Breast epithelium (tissue), 4 donors: ENCODE measurements at regions of chr5 and their contacts with region 1.

Region 1: DNA sequence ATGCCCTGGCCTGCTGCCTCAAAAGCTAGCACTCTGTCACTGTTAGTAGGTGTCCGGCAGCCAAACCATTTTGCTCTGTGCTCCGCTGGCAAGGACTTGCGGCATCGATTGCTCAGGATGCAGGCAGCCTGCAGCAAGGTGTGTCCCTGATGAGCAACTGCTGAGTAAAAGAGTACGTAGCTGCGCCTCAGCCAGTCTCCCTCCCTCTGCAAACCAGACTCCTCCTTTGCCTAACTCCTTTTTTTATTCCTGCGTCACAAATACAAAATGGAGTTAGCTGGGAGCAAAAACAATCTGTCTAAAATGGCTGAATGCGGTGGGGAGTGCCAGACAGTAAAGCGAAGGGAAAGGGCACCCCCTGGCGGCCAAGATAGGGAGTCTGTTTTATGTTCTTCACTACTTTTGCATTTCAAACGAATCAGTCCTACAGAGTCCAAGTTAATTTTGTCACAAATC is 61.1 kb downstream of the DIAPH1 start:
- DNase-seq: peak; percentile 80 to 89
- H3K4me3 ChIP-seq: peak overlapping the region in 2 of 3 donors; percentile 28 to 57
- H3K27ac ChIP-seq: peak overlapping the region; percentile 83 to 87
- H3K4me1 ChIP-seq: peaks cover 0 to 3% of the 10 kb centered on the region in 2 donors
- H3K27me3 ChIP-seq: no peaks in the 10 kb centered on the region
- CTCF ChIP-seq: peak; percentile 72 to 95 (median 73)
- POLR2A ChIP-seq: no peak

Region 2: DNA sequence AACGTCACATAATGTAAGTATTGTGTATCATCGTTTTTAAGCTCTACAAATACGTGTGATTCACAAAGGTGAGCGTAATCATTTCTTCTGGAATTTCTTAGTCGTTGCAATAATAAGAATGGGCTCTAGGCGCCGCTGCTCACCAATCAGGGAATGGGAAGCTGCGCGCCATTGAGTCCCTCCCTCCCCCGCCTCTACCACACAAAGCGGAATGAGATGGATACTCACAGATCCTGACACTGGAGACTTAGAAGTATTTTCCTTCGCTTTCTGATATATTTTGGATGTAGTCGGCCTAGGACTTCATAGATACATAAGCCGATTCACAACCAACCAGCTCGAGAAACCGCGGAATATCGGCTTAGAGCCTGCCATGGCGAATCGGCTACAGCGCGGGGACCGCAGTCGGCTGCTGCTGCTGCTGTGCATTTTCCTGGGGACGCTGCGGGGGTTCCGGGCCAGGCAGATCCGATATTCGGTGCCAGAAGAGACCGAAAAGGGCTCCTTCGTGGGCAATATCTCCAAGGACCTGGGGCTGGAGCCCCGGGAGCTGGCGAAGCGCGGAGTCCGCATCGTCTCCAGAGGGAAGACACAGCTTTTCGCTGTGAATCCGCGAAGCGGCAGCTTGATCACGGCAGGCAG is 136.7 kb before region 1 on chr5 and contains the start of gene PCDHGA11:
- intact Hi-C with region 1: loop called (anchors 10 kb)
- DNase-seq: no peak
- H3K4me3 ChIP-seq: peak within 1 kb of the TSS; percentile 0 to 54 (median 22)
- H3K27ac ChIP-seq: no peak within 1 kb of the TSS
- H3K4me1 ChIP-seq: no peaks in the 10 kb centered on the region
- H3K27me3 ChIP-seq: no peaks in the 10 kb centered on the region
- CTCF ChIP-seq: no peak
- POLR2A ChIP-seq: no peak
- total RNA-seq, gene PCDHGA11: 5.0 to 9.8 (median 9.7) TPM

Region 3: GRCh38 chr5:141585594-141585993 is 27.9 kb after region 1 on chr5:
- intact Hi-C with region 1: no loop called
- DNase-seq: no peak
- H3K4me3 ChIP-seq: no peak overlapping the region
- H3K27ac ChIP-seq: no peak overlapping the region
- H3K4me1 ChIP-seq: no peaks in the 10 kb centered on the region
- H3K27me3 ChIP-seq: no peaks in the 10 kb centered on the region
- CTCF ChIP-seq: no peak
- POLR2A ChIP-seq: no peak

Region 4: DNA sequence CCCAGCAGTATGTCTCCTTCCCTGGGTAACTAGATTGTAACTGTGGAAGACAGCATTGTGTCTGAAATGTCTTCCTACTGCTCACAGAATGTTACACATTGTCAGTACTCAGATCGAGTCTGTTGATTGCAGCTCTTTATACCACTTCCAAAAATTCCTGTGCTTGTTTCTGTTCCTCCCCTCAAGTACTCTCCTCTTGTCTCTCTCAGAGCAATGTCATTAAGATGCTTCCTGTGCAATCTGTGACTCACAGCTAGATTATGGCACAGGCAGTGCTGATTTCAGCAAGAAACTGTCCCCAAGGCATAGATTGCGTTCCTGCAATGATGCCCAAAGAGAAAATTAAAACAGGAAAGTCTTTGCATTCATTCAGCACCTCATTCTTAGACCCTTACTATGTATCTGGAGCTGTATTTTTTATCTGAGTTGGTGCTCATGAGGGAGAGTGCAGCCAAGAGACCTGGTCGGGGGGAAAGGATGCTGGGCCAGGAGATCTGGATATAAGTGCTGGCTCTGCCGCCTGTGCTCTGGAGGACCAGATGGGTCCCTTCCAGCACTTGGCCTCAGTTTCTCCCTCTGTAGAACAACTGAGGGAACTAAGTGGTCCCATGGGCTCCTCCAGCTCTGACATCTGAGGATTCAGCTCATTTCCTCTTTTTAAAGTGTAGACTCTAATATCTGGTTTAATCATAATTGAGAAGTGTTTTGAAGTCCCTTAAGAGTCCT is 495.9 kb after region 1 on chr5:
- intact Hi-C with region 1: no loop called
- DNase-seq: no peak
- H3K4me3 ChIP-seq: no peak overlapping the region
- H3K27ac ChIP-seq: peak overlapping the region in 1 of 2 donors; percentile 60
- H3K4me1 ChIP-seq: no peaks in the 10 kb centered on the region
- H3K27me3 ChIP-seq: no peaks in the 10 kb centered on the region
- CTCF ChIP-seq: no peak
- POLR2A ChIP-seq: no peak